ENCODE measurements at regions of chr10 and their contacts with region 1.

Region 1: DNA sequence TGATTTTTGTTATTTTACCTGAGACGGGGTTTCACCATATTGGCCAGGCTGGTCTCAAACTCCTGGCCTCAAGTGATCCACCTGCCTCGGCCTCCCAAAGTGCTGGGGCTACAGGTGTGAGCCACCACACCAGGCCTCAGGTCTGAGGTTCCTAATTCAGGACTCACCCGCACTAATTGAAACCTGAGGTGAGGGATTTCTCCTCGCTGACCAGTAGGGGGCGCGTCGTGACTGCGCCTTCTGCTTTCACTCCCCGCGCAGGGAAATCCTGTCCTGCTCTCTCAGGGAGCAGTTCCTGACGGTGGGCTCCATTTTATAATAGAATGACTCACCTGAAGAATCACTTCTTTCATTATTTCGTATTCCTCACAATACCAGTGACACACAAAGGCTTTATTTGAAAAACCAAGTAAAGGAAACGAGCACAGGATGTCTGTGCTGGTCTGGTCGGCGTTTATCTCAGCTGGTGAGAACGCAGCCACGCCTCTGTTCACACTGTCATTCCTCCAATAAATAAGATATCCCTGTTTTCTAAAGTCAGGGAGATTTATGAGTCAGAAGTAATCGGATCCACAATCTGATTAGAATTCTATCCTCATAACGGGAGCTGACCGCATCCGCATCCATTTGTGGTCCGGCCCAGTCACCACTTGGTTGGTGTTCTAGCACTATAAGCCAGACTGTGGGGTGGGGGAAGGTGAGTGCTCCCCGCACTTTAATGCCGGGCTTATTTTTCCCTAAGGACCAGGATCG is 35.4 kb downstream of the BAG3 start:
- DNase-seq: peak; percentile 54 to 97 (median 82)

Region 2: DNA sequence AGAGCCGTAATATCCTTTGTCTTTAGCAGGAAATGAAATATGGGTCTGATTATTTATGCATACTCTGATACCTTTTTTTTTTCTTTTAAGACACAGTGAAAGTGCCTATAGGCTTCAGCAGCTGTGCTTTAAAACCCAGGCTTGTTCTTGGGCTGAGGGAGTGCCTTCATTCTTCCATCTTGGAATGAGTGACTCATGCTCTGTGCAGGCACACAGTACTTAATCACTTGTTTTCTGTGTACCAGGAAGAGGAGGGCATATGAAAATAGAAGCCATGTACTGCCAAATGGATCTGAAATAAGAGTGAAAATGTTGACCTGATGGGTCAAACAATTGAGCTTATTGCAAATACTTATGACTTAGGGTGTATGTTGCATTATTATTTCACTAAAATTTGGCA is 51.2 kb after region 1 on chr10:
- intact Hi-C with region 1: no loop called
- DNase-seq: no peak

Region 3: DNA sequence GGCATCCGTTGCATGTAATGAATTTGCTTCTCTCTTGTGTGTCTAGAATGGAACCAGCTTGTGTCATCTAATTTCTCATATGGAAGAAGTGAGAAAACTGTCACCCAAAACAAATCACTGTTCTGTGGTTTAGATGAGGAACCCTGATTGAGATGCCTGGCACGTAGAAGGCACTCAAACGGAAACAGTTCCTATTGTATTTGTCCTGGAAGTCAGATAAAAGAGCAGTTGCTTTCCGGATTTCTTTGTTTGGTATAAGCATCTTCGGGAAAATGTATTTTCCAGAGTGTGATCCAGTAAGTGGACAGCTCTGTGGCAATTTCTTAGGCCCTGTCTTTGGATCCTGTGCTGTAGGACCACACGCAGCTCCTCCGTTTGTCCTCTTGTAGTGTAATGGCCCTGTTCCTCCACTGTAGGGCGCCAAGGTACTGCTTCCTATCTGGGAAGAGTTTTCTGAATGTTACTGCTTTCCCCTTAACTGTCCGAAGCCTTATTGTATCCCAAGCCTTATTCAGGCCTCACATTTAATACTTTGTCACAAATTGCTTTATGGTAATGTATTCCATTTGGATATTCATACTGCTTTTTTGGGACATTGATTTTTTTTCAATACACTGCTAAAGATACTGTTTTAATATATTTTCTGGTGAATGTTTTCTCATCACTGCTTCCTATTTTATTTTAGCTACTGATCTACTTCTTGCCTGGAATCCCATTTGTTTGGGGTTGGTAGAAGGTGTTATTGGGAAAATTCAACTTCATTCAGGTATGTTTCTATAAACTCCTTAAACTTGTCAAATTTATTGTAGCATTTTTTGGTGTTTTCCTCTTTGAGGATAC is 64.0 kb after region 1 on chr10:
- intact Hi-C with region 1: loop called (anchors 5 kb)
- DNase-seq: peak in 8 of 10 donors; percentile 42 to 95 (median 78)

Region 4: GRCh38 chr10:120833222-120833928 is 1146.8 kb after region 1 on chr10:
- intact Hi-C with region 1: no loop called
- DNase-seq: peak in 1 of 10 donors; percentile 26